RWPE1 (cell line): ENCODE measurements at regions of chr21 and their contacts with region 1.

Region 1: DNA sequence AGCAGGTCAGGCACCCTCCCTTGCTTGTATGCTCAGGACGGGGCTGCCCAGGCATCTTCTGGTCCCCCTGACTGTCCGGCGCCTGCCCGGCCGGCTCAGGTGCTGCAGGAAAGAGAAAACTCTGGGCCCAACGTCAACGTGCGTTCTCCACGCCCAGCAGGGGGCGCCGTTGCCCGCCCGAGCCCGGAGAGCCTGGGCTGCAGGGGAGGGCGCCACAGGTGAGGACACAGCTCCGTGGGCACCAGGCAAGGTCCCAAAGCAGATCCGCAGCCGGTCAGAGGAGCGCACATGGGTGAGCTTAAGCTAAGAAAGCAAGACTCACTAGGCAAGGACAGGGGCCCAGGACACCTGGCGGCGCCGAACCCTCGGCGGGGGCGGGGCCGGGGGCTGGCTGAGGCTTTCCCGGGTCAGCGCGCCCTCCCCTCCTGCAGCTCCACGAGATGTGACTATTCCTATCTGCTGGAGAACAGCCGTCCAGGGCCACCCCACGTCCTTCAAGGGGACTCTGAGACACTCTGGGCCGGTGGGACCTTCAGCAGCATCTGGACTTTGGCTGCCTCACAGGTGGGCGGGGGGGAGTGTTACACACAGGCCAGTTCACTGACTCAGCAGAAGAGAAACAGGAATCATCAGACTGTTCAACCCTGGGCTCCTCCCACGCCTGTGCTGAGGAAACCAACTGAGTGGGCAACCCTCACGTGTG is 29.3 kb downstream of the KRTAP10-1 start:
- DNase-seq: peak; percentile 41
- H3K27ac ChIP-seq: no peak overlapping the region
- CTCF ChIP-seq: peak; percentile 66

Region 2: GRCh38 chr21:44454747-44455523 is 55.7 kb before region 1 on chr21 and contains the start of gene LRRC3:
- CTCF ChIA-PET with region 1: no interaction called
- POLR2A ChIA-PET with region 1: no interaction called
- DNase-seq: peak; percentile 95
- H3K27ac ChIP-seq: peak within 1 kb of the TSS; percentile 8; the same call in 1 of the 2 replicates
- CTCF ChIP-seq: no peak

Region 3: DNA sequence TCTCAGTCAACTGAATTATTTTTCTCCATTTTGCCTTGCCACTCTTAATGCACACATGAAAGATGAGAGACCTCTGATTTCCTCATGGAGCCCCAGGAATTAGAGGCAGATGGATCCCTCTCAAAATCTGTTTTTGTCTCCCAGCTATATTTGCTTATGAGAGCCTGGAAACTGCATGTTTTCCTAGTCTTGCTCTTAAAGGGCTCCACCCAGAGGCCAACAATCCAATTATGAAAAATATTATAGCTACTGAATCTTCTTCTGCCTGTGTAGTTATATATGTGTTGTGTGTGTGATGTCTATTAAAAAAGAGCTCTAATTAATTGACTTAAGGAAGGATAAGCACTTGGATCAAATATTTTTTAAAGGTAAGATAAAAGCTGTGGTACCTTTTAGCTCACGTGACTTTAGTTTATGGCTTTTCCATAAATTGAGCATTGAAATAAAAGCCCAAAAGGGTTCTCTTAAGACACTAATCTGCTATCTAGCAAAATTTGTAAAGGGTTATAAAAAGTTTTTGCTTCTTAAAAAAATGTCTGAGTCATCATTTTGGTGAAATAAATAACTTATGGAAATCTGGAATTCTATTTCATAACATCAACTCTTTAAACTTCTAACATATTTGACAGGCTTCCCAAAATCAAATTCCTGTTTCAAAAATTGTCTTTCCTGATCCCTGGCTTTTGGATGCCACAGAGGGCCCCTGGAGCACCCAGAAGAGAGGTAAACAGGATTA is 231.9 kb after region 1 on chr21:
- CTCF ChIA-PET with region 1: interaction called, 21 read pairs
- POLR2A ChIA-PET with region 1: no interaction called
- DNase-seq: no peak
- H3K27ac ChIP-seq: no peak overlapping the region
- CTCF ChIP-seq: peak; percentile 48

Region 4: GRCh38 chr21:44792702-44793591 is 282.3 kb after region 1 on chr21:
- CTCF ChIA-PET with region 1: interaction called, 36 read pairs
- POLR2A ChIA-PET with region 1: no interaction called
- DNase-seq: peak; percentile 81
- H3K27ac ChIP-seq: no peak overlapping the region
- CTCF ChIP-seq: peak; percentile 86